HEK293 (cell line): ENCODE measurements at regions of chr15 and their contacts with region 1.

Region 1: GRCh38 chr15:94324117-94324826 is 92.9 kb downstream of the MCTP2 start:
- H3K4me3 ChIP-seq: no peak overlapping the region
- H3K27ac ChIP-seq: no peak overlapping the region
- H3K4me1 ChIP-seq: no peaks in the 10 kb centered on the region
- CTCF ChIP-seq: peak; percentile 80

Region 2: GRCh38 chr15:94163999-94164807 is 160.1 kb before region 1 on chr15:
- CTCF ChIA-PET with region 1: interaction called, 258 read pairs
- POLR2A ChIA-PET with region 1: no interaction called
- H3K4me3 ChIP-seq: no peak overlapping the region
- H3K27ac ChIP-seq: no peak overlapping the region
- H3K4me1 ChIP-seq: no peaks in the 10 kb centered on the region
- CTCF ChIP-seq: peak; percentile 61

Region 3: GRCh38 chr15:94230956-94231722 is 93.1 kb before region 1 on chr15 and contains the start of gene MCTP2:
- CTCF ChIA-PET with region 1: interaction called, 11 read pairs
- POLR2A ChIA-PET with region 1: no interaction called
- H3K4me3 ChIP-seq: peak within 1 kb of the TSS; percentile 72
- H3K27ac ChIP-seq: peak within 1 kb of the TSS; percentile 70; the same call in 1 of the 2 replicates
- H3K4me1 ChIP-seq: peaks cover 25% of the 10 kb centered on the region
- CTCF ChIP-seq: peak; percentile 8; the same call in 1 of the 2 replicates

Region 4: GRCh38 chr15:94295275-94295674 is 29.0 kb before region 1 on chr15:
- CTCF ChIA-PET with region 1: no interaction called
- POLR2A ChIA-PET with region 1: no interaction called
- H3K4me3 ChIP-seq: no peak overlapping the region
- H3K27ac ChIP-seq: no peak overlapping the region
- H3K4me1 ChIP-seq: no peaks in the 10 kb centered on the region
- CTCF ChIP-seq: no peak

Region 5: GRCh38 chr15:94335616-94336015 is 11.3 kb after region 1 on chr15:
- CTCF ChIA-PET with region 1: interaction called, 41 read pairs
- POLR2A ChIA-PET with region 1: no interaction called
- H3K4me3 ChIP-seq: no peak overlapping the region
- H3K27ac ChIP-seq: no peak overlapping the region
- H3K4me1 ChIP-seq: no peaks in the 10 kb centered on the region
- CTCF ChIP-seq: no peak